ENCODE measurements at regions of chr12 and their contacts with region 1.

Region 1: DNA sequence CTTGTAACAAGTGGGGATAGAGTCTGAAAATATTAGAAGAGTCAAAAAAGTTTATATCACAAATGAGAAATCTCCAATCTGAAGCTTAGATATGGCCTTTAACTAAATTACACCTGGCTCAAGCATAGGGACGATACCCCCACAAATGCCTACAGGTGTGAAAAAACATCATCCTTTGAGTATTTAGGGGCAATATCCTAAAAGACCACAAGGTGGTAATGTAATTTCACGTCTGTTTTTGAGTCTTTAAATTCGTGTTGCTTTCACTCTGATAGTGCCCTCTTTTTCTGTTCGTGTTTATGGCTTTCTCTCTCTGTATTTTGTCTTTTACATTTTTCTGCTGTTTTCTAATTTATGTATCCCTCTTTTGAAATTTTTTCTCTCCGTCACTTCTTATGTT is 84.3 kb downstream of the ETNK1 start:
- DNase-seq: no peak
- H3K4me3 ChIP-seq: no peak overlapping the region
- H3K27ac ChIP-seq: peak overlapping the region in 1 of 4 donors; percentile 17
- H3K4me1 ChIP-seq: peaks cover 0 to 8% (median 3%) of the 10 kb centered on the region in 4 donors
- H3K27me3 ChIP-seq: no peaks in the 10 kb centered on the region
- CTCF ChIP-seq: peak; percentile 60 to 74 (median 74)
- EP300 ChIP-seq: no peak
- POLR2A ChIP-seq: no peak

Region 2: GRCh38 chr12:22121227-22121626 is 588.1 kb before region 1 on chr12:
- intact Hi-C with region 1: no loop called
- DNase-seq: no peak
- H3K4me3 ChIP-seq: no peak overlapping the region
- H3K27ac ChIP-seq: no peak overlapping the region
- H3K4me1 ChIP-seq: peaks cover 0 to 29% (median 18%) of the 10 kb centered on the region in 4 donors
- H3K27me3 ChIP-seq: no peaks in the 10 kb centered on the region
- CTCF ChIP-seq: peak in 1 of 3 experiments; percentile 6
- EP300 ChIP-seq: no peak
- POLR2A ChIP-seq: no peak

Region 3: GRCh38 chr12:22416801-22417200 is 292.5 kb before region 1 on chr12:
- intact Hi-C with region 1: no loop called
- DNase-seq: no peak
- H3K4me3 ChIP-seq: no peak overlapping the region
- H3K27ac ChIP-seq: peak overlapping the region in 1 of 4 donors; percentile 34
- H3K4me1 ChIP-seq: peaks cover 25 to 48% (median 40%) of the 10 kb centered on the region in 4 donors
- H3K27me3 ChIP-seq: no peaks in the 10 kb centered on the region
- CTCF ChIP-seq: no peak
- EP300 ChIP-seq: no peak
- POLR2A ChIP-seq: no peak

Region 4: DNA sequence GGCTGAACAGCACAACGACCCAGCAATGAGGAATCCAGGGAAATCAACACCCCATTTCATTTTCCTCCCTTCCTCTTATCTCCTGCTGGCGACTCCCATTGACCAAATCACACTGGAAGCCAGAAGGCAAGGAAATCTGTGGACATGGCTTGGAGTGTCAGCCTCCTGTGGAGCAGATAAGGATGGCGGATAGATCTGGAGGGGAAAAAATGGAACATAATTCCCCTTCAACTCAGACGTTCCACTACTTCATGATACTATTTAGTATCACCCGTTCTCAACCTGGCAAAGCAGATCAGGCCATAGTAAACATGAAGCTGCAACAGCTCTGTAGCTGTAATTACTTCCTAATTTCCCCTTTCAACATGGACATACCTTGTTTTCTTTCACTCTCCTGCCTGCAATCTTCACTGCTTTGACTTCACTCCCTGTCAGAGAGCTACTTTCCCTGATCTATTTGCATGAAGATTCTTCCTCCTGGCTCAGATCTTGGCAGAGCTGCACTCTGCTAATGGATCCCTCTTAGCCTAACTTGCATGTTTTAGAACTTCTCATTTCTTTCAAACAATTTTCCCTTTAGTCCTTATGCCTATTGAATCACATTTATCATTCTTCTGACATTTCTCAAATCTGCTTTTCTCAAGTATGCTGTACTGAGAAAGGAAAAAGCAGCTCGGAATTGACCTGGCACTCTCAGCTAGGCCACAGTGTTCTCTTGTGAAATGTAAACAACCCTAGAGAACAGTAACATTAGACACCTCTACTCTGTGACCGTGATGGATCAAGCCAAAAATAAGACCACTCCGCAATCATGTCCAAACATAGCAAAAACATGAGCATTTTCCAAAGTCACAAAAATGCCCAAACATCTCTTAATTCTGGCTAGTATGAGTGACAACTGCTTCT is 50.7 kb after region 1 on chr12:
- intact Hi-C with region 1: no loop called
- DNase-seq: no peak
- H3K4me3 ChIP-seq: peak overlapping the region; percentile 40 to 59 (median 46)
- H3K27ac ChIP-seq: peak overlapping the region; percentile 90 to 93 (median 90)
- H3K4me1 ChIP-seq: peaks cover 0 to 48% (median 28%) of the 10 kb centered on the region in 4 donors
- H3K27me3 ChIP-seq: no peaks in the 10 kb centered on the region
- CTCF ChIP-seq: no peak
- EP300 ChIP-seq: peak; percentile 92
- POLR2A ChIP-seq: no peak

Region 5: DNA sequence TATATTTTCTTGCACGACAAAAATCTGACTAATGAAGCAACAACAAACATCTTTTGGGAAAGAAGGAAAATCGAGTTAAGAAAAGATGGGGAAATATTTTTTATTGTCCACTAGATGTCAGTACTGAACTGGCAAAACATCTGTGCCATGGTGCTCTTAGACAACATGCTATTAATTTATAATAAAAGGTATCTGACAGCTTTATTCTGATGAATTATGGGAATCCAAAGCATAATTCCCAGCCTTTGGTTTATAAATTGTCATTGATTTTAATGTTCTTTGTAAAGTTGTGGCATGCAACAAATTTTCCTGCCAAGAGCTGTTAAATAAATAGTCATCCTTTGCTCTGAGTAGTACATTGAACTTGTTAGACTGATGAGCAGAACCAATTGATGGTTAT is 146.9 kb after region 1 on chr12:
- intact Hi-C with region 1: loop called (anchors 5 kb)
- DNase-seq: no peak
- H3K4me3 ChIP-seq: peak overlapping the region in 1 of 4 donors; percentile 17
- H3K27ac ChIP-seq: no peak overlapping the region
- H3K4me1 ChIP-seq: peaks cover 0 to 24% (median 17%) of the 10 kb centered on the region in 4 donors
- H3K27me3 ChIP-seq: no peaks in the 10 kb centered on the region
- CTCF ChIP-seq: peak; percentile 54 to 59 (median 59)
- EP300 ChIP-seq: no peak
- POLR2A ChIP-seq: no peak

Region 6: GRCh38 chr12:23084236-23084995 is 375.1 kb after region 1 on chr12:
- intact Hi-C with region 1: no loop called
- DNase-seq: no peak
- H3K4me3 ChIP-seq: no peak overlapping the region
- H3K27ac ChIP-seq: no peak overlapping the region
- H3K4me1 ChIP-seq: no peaks in the 10 kb centered on the region
- H3K27me3 ChIP-seq: no peaks in the 10 kb centered on the region
- CTCF ChIP-seq: no peak
- EP300 ChIP-seq: no peak
- POLR2A ChIP-seq: no peak

Measured in esophagus muscularis mucosa (tissue), 4 donors.